Endothelial cell of umbilical vein (primary cell): ENCODE measurements at regions of chr7 and their contacts with region 1.

Region 1: GRCh38 chr7:34277016-34277802 is 371.9 kb downstream of the BMPER start:
- DNase-seq: peak; percentile 84
- H3K4me3 ChIP-seq: peak overlapping the region in 1 of 3 experiments; percentile 29
- H3K27ac ChIP-seq: peak overlapping the region; percentile 86
- H3K4me1 ChIP-seq: peaks cover 25% of the 10 kb centered on the region
- H3K27me3 ChIP-seq: no peaks in the 10 kb centered on the region
- CTCF ChIP-seq: no peak
- POLR2A ChIP-seq: peak; percentile 58

Region 2: DNA sequence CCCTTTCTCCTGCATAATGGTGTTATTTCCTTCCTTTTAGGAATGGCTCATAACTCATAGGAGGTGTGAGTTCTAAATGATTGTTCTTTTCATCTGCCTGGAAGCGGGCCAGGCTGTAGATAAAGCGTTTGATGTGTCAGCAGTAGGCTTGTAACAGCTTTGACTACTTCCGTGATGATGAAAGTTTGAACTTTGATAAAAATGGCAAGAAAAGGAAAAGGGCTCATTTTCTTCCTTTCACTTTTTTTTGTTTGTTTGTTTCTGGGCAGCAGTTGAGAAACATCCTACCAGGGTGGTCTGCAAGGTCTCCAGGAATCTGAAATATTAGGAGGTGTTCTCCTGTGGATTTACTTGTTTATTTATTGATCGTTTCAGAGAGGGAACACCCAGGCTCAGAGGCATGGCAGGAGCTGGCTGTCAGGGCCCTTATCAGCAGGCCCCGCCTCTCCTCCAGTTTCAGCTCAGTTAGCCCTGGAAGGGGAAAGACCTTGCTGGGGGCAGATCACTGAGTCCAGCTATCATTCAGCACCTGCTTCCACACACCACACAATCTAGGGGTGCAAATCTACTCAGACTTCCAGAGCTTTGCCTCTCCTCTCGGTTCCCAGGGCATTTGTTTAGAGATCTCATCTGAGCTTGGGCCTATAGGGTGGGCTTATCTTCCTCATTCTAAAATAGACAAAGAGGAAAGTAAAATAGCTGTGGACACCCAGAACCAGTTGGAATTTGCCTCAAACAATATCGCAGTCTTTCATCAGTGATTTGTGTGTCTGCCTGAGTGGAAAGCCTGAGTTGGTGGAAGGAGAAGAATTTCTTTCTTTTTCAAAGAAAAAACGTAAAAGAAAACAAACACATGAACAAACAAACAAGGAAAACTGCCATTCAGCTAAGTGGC is 240.9 kb before region 1 on chr7:
- CTCF ChIA-PET with region 1: no interaction called
- POLR2A ChIA-PET with region 1: no interaction called
- dilution Hi-C with region 1: no loop called
- intact Hi-C with region 1: loop called (anchors 10 kb)
- DNase-seq: peak; percentile 94
- H3K4me3 ChIP-seq: no peak overlapping the region
- H3K27ac ChIP-seq: peak overlapping the region; percentile 58
- H3K4me1 ChIP-seq: peaks cover 18% of the 10 kb centered on the region
- H3K27me3 ChIP-seq: no peaks in the 10 kb centered on the region
- CTCF ChIP-seq: no peak
- POLR2A ChIP-seq: no peak

Region 3: GRCh38 chr7:34240417-34240816 is 36.8 kb before region 1 on chr7:
- CTCF ChIA-PET with region 1: no interaction called
- POLR2A ChIA-PET with region 1: no interaction called
- dilution Hi-C with region 1: no loop called
- intact Hi-C with region 1: no loop called
- DNase-seq: no peak
- H3K4me3 ChIP-seq: no peak overlapping the region
- H3K27ac ChIP-seq: no peak overlapping the region
- H3K4me1 ChIP-seq: no peaks in the 10 kb centered on the region
- H3K27me3 ChIP-seq: peaks cover 3% of the 10 kb centered on the region in 2 experiments
- CTCF ChIP-seq: no peak
- POLR2A ChIP-seq: no peak

Region 4: GRCh38 chr7:34296663-34297062 is 19.5 kb after region 1 on chr7:
- CTCF ChIA-PET with region 1: no interaction called
- POLR2A ChIA-PET with region 1: no interaction called
- dilution Hi-C with region 1: no loop called
- intact Hi-C with region 1: loop called (anchors 1 kb)
- DNase-seq: no peak
- H3K4me3 ChIP-seq: no peak overlapping the region
- H3K27ac ChIP-seq: no peak overlapping the region
- H3K4me1 ChIP-seq: peaks cover 20% of the 10 kb centered on the region
- H3K27me3 ChIP-seq: no peaks in the 10 kb centered on the region
- CTCF ChIP-seq: no peak
- POLR2A ChIP-seq: no peak

Region 5: GRCh38 chr7:34453150-34453549 is 175.9 kb after region 1 on chr7:
- CTCF ChIA-PET with region 1: no interaction called
- POLR2A ChIA-PET with region 1: no interaction called
- dilution Hi-C with region 1: no loop called
- intact Hi-C with region 1: loop called (anchors 1 kb)
- DNase-seq: peak; percentile 71
- H3K4me3 ChIP-seq: peak overlapping the region in 1 of 3 experiments; percentile 27
- H3K27ac ChIP-seq: peak overlapping the region; percentile 63
- H3K4me1 ChIP-seq: peaks cover 30% of the 10 kb centered on the region
- H3K27me3 ChIP-seq: no peaks in the 10 kb centered on the region
- CTCF ChIP-seq: no peak
- POLR2A ChIP-seq: no peak

Region 6: GRCh38 chr7:34747867-34748727 is 470.9 kb after region 1 on chr7:
- CTCF ChIA-PET with region 1: no interaction called
- POLR2A ChIA-PET with region 1: no interaction called
- dilution Hi-C with region 1: no loop called
- intact Hi-C with region 1: loop called (anchors 1 kb)
- DNase-seq: peak; percentile 97
- H3K4me3 ChIP-seq: no peak overlapping the region
- H3K27ac ChIP-seq: peak overlapping the region; percentile 36
- H3K4me1 ChIP-seq: peaks cover 16% of the 10 kb centered on the region
- H3K27me3 ChIP-seq: no peaks in the 10 kb centered on the region
- CTCF ChIP-seq: no peak
- POLR2A ChIP-seq: no peak